Dorsolateral prefrontal cortex (tissue), 120 donors: ENCODE measurements at regions of chr5 and their contacts with region 1.

Region 1: DNA sequence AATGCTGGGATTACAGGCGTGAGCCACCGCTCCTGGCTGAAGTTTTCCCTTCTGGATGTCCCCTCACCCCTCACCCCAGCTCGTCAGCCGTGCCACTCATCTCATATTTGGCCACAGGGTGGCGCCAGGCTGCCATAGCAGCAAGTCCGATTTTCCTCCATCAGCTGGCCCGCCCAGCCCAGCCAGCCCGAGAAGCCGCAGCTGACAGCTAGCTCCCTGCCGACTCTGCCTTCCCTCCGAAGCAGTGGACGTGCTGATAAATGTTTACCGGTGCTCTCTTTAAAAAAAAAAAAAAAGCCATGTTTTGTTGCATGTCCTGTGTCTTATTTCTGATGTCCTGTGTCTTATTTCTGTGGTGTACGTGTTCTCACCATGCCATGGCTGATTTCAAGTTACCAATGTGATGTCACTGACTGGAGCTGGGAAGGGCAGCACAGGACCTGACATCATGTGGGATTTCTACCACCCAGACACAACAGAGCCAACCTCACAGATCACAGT is 58.3 kb downstream of the PFDN1 start:
- DNase-seq: peak; percentile 89 to 95 (median 94)
- H3K4me3 ChIP-seq: peak overlapping the region in 23 of 59 donors; percentile 1 to 42 (median 24)
- H3K27ac ChIP-seq: peak overlapping the region in 58 of 59 donors; percentile 5 to 90 (median 78)
- H3K27me3 ChIP-seq: no peaks in the 10 kb centered on the region
- CTCF ChIP-seq: peak; percentile 60 to 99 (median 94)

Region 2: DNA sequence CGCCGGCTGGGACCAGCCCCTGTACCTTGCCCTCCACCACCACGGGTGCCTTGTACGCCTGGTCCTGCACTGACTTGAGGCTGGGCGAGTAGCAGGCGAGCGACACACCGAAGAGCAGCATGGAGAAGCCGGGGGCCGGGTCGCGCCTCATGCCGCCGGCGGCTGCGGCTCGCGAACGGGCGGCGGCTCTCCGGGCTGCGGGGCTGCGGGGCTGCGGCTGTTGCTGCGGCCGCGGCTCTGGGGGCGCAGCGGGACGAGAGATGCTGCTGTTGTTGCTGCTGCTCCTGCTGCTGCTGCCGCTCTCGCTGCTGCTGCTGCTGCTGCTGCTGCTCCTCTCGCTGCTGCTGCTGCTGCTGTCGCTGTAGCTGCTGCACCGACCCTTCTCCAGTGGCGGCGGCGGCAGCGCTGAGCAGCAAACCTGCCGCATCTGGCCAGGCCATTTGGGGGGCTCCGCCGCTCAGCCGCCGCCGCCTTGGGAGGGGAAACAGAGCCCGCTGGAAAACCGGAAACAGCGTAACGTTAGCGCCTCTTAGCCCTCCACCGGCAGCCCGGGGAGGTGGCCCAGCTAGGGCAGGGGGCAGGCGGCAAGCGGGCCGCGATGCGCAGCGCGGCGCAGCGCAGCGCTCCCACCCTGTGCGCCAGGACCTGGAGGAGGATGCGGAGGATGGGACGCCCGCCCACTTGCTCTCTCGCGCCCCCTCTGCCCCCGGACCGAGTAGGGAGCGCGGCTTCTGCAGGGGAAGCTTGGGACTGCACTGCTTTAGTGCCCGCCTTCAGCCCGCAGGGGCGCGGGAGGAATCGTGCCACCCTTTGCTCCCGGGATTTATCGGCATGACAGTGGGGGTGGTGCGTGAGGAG is 201.7 kb before region 1 on chr5 and contains the start of gene NRG2:
- intact Hi-C with region 1: loop called in 1 of 2 experiments (anchors 5 kb)
- DNase-seq: peak; percentile 62 to 89 (median 75)
- H3K4me3 ChIP-seq: peak within 1 kb of the TSS; percentile 52 to 88 (median 80)
- H3K27ac ChIP-seq: peak within 1 kb of the TSS; percentile 41 to 94 (median 85)
- H3K27me3 ChIP-seq: no peaks in the 10 kb centered on the region
- CTCF ChIP-seq: peak in 52 of 56 donors; percentile 27 to 77 (median 59)
- total RNA-seq, gene NRG2: 5.8 to 21.5 (median 11.8) TPM

Region 3: DNA sequence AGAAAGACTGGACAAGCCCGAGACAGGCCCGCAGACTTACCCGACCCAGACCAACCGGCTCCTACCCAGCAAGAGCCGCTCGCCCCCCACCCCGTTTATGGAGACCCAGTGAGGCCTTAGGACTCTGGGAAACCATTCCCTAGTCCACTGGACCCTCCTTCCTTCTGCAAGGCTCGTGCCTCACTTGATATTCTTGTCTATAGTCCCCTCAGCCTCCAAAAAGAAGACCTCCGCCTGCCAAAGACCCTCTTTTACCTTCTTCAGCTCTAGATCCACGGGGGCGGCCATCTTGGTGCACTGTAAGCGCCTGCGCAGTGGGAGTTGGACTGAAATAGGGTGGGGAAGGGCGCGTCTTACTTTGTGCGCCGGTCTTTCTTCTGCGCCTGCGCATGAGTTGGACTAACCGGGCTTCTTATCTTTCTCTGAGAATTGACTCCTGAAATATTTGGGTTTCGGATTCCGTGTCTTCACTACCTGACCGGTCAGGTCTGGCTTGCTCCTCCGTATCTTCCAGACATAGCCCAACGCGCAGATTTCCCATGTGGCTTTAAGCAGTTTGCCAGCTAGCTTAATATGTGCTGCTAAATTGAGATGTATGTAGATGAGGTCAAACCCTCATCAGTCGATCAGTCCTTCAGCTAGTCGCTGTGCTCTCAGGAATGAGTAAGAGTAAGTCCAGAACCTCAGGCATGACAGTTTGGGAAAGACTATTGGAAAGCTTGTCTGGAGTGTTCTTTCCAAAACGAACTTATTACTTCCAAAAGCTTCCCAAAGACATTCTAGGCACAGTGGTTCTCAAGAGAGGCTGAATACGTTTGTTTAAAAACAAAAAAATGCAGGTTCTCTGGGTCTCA is 58.4 kb after region 1 on chr5 and contains the start of gene PFDN1:
- intact Hi-C with region 1: loop called (anchors 2 to 10 kb)
- DNase-seq: peak; percentile 89 to 96 (median 94)
- H3K4me3 ChIP-seq: peak within 1 kb of the TSS; percentile 66 to 99 (median 87)
- H3K27ac ChIP-seq: peak within 1 kb of the TSS in 58 of 59 donors; percentile 59 to 96 (median 86)
- H3K27me3 ChIP-seq: no peaks in the 10 kb centered on the region
- CTCF ChIP-seq: peak in 29 of 56 donors; percentile 8 to 52 (median 24)
- total RNA-seq, gene PFDN1: 43.9 to 80.3 (median 64.1) TPM

Region 4: DNA sequence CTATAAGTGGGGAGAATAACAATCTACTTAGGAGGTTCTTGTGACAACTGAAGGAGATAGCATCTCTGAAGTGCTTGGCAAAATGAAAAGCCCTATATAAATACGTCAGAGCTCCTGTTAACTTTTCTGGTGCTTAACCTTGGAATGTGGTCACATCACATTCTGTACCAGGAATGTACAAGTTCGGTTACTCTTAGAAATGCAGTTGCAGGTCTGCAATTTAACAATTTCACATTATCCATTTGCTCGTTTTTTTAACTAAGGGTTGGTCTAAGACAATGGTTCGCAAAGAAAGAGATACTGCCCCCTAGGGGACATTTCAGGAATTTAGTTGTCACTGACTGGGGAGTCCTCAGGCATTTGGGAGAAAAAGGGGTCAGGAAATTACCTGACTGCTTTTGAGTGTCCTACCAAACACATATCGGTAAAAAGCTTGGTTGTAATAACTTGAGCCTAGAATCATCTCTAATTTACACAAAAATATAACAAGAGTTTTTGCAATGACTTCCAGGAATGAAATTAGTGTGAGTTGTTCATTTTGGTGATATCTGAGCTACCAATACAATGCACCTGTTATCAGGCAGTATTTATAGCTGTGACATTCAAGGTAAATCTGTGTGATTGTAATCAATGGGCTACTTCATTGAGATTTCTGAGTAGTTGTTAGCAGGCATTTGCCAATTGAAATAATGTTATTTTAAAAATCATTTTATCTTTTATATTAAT is 107.2 kb after region 1 on chr5:
- intact Hi-C with region 1: loop called (anchors 1 to 2 kb)
- DNase-seq: peak in 2 of 10 donors; percentile 51 to 69
- H3K4me3 ChIP-seq: peak overlapping the region in 2 of 59 donors; percentile 13 to 14
- H3K27ac ChIP-seq: peak overlapping the region in 8 of 59 donors; percentile 29 to 69 (median 38)
- H3K27me3 ChIP-seq: no peaks in the 10 kb centered on the region
- CTCF ChIP-seq: peak; percentile 83 to 99 (median 94)

Region 5: GRCh38 chr5:140700177-140701144 is 455.9 kb after region 1 on chr5 and contains the start of gene ZMAT2:
- intact Hi-C with region 1: loop called in 1 of 2 experiments (anchors 10 kb)
- DNase-seq: peak; percentile 94 to 99 (median 97)
- H3K4me3 ChIP-seq: peak within 1 kb of the TSS; percentile 52 to 99 (median 86)
- H3K27ac ChIP-seq: peak within 1 kb of the TSS in 56 of 59 donors; percentile 10 to 89 (median 72)
- H3K27me3 ChIP-seq: no peaks in the 10 kb centered on the region
- CTCF ChIP-seq: peak in 25 of 56 donors; percentile 3 to 51 (median 27)
- total RNA-seq, gene ZMAT2: 46.1 to 101 (median 76.4) TPM